ENCODE measurements at regions of chr18 and their contacts with region 1.

Region 1: DNA sequence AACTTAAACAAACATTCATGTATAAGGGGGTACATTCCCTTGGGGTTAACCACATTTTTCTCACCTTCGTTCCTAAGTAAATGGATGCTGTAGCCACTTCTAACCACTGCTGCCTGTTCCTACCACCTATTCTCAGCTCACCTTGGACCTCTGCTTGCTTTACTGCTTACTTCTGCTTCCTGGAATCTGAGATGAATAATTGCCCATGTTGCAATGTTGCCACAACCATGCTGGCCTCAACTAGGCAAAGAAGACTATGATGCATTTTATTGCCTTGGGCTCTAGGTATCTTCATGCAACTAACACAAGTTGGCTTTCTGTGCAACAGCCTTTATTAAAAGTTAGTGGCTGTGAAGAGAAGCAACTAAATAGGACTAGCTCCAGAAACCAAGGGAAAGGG is 106.3 kb upstream of the TCF4 start:
- DNase-seq: no peak
- ATAC-seq: no peak
- H3K4me3 ChIP-seq: no peak overlapping the region
- H3K27ac ChIP-seq: no peak overlapping the region
- H3K4me1 ChIP-seq: no peaks in the 10 kb centered on the region
- H3K27me3 ChIP-seq: no peaks in the 10 kb centered on the region
- CTCF ChIP-seq: no peak

Region 2: DNA sequence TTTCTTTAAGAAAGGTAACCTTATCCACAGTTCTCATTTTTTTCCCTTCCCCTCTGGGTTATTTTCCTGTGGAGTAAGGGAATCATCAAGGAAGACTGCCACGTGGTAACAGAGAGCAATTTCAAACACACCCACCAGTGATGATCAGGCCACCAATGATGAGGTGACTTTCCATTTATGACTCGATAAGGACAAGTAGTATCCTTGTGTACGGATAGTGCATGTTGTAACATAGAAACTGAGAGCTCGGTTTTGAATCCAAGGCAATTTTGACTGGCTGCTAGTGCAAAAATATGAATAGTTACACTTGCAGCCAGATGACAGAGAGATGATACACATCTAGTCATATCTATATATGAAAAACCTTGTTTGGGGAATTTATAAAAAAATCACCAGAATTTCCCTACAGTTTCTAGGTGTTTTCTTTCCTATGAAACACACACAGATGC is 37.3 kb after region 1 on chr18:
- intact Hi-C with region 1: loop called in 1 of 10 experiments (anchors 2 kb)
- DNase-seq: no peak
- ATAC-seq: peak in 5 of 8 donors; percentile 31 to 61 (median 46)
- H3K4me3 ChIP-seq: no peak overlapping the region
- H3K27ac ChIP-seq: peak overlapping the region; percentile 16 to 84 (median 56)
- H3K4me1 ChIP-seq: peaks cover 0 to 21% (median 17%) of the 10 kb centered on the region in 9 donors
- H3K27me3 ChIP-seq: no peaks in the 10 kb centered on the region
- CTCF ChIP-seq: no peak

Region 3: GRCh38 chr18:55763298-55763697 is 69.0 kb after region 1 on chr18:
- intact Hi-C with region 1: loop called in 1 of 10 experiments (anchors 10 kb)
- DNase-seq: no peak
- ATAC-seq: no peak
- H3K4me3 ChIP-seq: no peak overlapping the region
- H3K27ac ChIP-seq: no peak overlapping the region
- H3K4me1 ChIP-seq: no peaks in the 10 kb centered on the region
- H3K27me3 ChIP-seq: no peaks in the 10 kb centered on the region
- CTCF ChIP-seq: no peak

Measured in heart right ventricle (tissue), 16 donors.